ENCODE measurements at regions of chr19 and their contacts with region 1.

Region 1: DNA sequence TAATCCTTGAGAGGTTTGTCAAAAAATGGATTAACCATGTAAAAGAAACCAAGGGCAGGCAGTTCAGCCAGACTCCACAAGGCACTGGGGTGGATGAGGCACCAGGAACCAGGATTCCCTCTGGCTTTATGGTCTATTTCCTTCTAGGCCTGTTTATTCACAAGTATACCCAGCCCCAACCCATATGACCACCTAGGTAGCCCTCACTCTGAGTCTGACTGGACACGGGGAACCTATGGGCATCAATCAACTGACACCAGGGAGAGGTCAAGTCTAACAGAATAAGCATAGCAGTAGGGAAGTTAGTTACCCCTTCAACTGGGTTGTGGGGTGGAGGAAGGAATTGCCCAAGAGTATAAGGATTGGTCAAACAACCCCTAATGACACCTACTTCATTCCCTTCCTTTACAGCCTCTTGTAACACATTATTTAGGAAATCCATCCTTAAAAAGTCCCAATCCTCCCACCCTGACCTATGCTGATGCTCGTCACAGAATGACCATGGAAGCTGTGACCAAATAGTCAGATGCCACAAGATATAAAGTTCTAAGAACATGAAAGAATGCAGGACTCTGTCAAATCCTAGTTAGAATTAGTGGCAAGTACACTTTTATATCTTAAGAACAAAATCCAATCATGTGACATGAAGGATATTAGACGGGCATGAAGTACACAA is 31.7 kb downstream of the PEG3 start:
- DNase-seq: no peak
- H3K4me3 ChIP-seq: no peak overlapping the region
- H3K27ac ChIP-seq: no peak overlapping the region
- H3K4me1 ChIP-seq: no peaks in the 10 kb centered on the region
- H3K27me3 ChIP-seq: no peaks in the 10 kb centered on the region
- CTCF ChIP-seq: no peak

Region 2: GRCh38 chr19:56732976-56733375 is 75.9 kb before region 1 on chr19:
- CTCF ChIA-PET with region 1: no interaction called
- dilution Hi-C with region 1: loop called (anchors 5 kb)
- in situ Hi-C with region 1: no loop called
- intact Hi-C with region 1: no loop called
- DNase-seq: no peak
- H3K4me3 ChIP-seq: no peak overlapping the region
- H3K27ac ChIP-seq: no peak overlapping the region
- H3K4me1 ChIP-seq: no peaks in the 10 kb centered on the region
- H3K27me3 ChIP-seq: no peaks in the 10 kb centered on the region
- CTCF ChIP-seq: no peak

Region 3: DNA sequence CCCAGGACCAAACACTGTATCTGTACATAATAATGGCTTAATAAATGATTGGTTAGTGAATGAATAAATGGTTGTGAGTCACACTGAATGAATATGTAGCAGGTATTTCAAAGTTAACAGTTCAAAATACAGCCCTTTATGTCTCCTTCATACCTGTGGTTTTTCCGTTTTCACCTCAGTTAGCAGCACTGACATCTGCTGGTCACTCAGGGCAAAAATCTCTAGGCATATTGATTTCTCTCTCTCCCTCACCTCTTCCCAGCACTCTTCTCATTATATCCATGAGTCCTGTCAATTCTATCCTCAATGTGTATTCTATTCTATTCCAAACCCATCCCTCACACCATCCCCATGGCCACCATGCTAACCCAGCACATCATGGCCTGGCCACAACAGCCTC is 44.6 kb before region 1 on chr19:
- CTCF ChIA-PET with region 1: no interaction called
- dilution Hi-C with region 1: no loop called
- in situ Hi-C with region 1: no loop called
- intact Hi-C with region 1: no loop called
- DNase-seq: no peak
- H3K4me3 ChIP-seq: no peak overlapping the region
- H3K27ac ChIP-seq: no peak overlapping the region
- H3K4me1 ChIP-seq: no peaks in the 10 kb centered on the region
- H3K27me3 ChIP-seq: no peaks in the 10 kb centered on the region
- CTCF ChIP-seq: no peak

Measured in mammary epithelial cell (primary cell).